Stomach (tissue), 19 donors: ENCODE measurements at regions of chr3 and their contacts with region 1.

Region 1: GRCh38 chr3:26406636-26407035 is 215.9 kb upstream of the LRRC3B start:
- DNase-seq: no peak
- H3K4me3 ChIP-seq: no peak overlapping the region
- H3K27ac ChIP-seq: no peak overlapping the region
- H3K4me1 ChIP-seq: no peaks in the 10 kb centered on the region
- H3K27me3 ChIP-seq: no peaks in the 10 kb centered on the region
- CTCF ChIP-seq: no peak
- EP300 ChIP-seq: no peak
- POLR2A ChIP-seq: no peak

Region 2: DNA sequence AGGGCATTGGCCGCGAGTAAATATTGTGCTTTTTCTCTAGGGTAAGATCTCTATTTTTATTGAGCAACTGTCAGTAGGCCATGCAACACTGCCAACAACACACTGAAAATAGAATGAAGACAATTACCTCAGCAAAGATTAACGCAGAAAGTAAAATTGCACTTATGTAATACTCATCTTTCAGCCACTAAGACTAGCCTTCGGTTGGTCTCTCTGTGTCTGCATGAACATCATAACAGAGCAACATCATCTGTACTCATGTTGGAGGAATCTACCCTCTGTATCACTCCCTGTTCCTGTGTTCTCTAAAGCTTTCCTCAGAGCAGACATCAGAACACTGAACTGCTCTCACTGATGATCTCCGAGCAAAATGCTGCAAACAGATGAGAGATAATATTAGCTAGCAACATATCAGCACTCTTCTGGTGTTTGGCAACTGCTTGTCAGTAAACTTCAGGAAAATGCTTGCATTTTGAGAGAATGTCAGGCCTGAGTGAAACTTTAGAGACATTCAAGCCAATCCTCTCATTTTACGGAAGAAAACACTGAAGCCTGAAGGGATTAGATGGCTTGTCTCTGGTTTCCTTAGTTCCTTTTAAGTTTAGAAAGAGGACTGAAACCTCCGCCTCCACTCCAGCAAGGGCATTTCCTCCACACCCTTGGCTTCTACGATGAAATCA is 207.5 kb after region 1 on chr3:
- intact Hi-C with region 1: loop called (anchors 5 kb)
- DNase-seq: no peak
- H3K4me3 ChIP-seq: no peak overlapping the region
- H3K27ac ChIP-seq: no peak overlapping the region
- H3K4me1 ChIP-seq: no peaks in the 10 kb centered on the region
- H3K27me3 ChIP-seq: peaks cover 0 to 2% (median 0%) of the 10 kb centered on the region in 3 donors
- CTCF ChIP-seq: no peak
- EP300 ChIP-seq: no peak
- POLR2A ChIP-seq: no peak

Region 3: GRCh38 chr3:26712211-26713026 is 305.8 kb after region 1 on chr3:
- intact Hi-C with region 1: no loop called
- DNase-seq: peak in 1 of 2 donors; percentile 82
- H3K4me3 ChIP-seq: no peak overlapping the region
- H3K27ac ChIP-seq: no peak overlapping the region
- H3K4me1 ChIP-seq: peaks cover 0 to 4% (median 0%) of the 10 kb centered on the region in 4 donors
- H3K27me3 ChIP-seq: no peaks in the 10 kb centered on the region
- CTCF ChIP-seq: peak in 5 of 7 experiments; percentile 20 to 65 (median 52)
- EP300 ChIP-seq: no peak
- POLR2A ChIP-seq: no peak